WTC11 (cell line): ENCODE measurements at regions of chr12 and their contacts with region 1.

Region 1: DNA sequence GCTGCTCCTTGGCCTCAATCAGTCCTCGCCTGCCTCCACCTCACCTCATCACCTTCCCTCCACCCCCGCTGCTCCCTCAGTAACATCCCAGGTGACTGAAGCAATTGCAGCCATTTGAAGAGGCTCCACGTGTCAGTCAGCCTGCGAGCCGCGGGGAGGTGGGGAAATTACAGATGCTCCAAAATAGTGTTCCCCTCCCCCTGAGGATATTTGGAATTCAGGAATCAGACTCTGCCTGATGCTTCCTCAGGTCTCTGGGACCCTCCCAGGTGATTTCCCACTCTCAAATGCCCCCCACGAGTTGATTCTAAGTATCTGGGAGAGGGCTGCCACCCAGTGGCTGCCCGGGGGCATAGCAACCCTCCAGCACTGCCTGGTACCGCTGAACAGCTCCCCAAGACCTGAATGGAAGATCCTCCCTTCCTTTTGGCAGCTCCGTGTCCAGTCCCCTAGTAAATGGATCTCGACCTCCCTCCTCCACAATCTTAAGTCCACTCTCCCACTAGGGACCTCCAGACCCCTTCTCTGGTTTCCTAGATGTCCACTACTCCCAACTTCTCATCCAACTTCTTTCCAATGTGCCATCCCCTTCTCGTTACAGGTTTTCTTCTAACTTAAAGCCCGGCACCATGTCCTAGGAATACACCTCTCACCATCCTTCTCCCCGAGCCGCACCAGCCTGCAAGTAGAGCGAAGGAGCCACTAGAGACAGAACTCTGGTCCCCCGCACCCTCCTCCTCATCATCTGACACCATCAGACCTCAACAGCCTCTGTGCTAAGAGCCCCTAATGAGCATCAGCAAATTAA is 1.4 kb upstream of the ASIC1 start:
- DNase-seq: peak; percentile 72
- ATAC-seq: peak; percentile 46
- H3K4me3 Mint-ChIP-seq: peak overlapping the region; percentile 79
- H3K27ac Mint-ChIP-seq: no peak overlapping the region
- H3K4me1 Mint-ChIP-seq: peaks cover 25% of the 10 kb centered on the region
- H3K27me3 Mint-ChIP-seq: peaks cover 95% of the 10 kb centered on the region
- CTCF ChIP-seq: peak; percentile 94

Region 2: GRCh38 chr12:49959570-49960465 is 96.2 kb before region 1 on chr12:
- CTCF ChIA-PET with region 1: interaction called, 12 read pairs
- POLR2A ChIA-PET with region 1: interaction called, 3 read pairs
- DNase-seq: peak; percentile 61
- ATAC-seq: peak; percentile 72
- H3K4me3 Mint-ChIP-seq: peak overlapping the region; percentile 65
- H3K27ac Mint-ChIP-seq: no peak overlapping the region
- H3K4me1 Mint-ChIP-seq: peaks cover 24% of the 10 kb centered on the region
- H3K27me3 Mint-ChIP-seq: peaks cover 69% of the 10 kb centered on the region
- CTCF ChIP-seq: no peak

Region 3: GRCh38 chr12:49983892-49984291 is 72.1 kb before region 1 on chr12:
- CTCF ChIA-PET with region 1: interaction called, 12 read pairs
- POLR2A ChIA-PET with region 1: no interaction called
- DNase-seq: no peak
- ATAC-seq: no peak
- H3K4me3 Mint-ChIP-seq: no peak overlapping the region
- H3K27ac Mint-ChIP-seq: no peak overlapping the region
- H3K4me1 Mint-ChIP-seq: peaks cover 26% of the 10 kb centered on the region
- H3K27me3 Mint-ChIP-seq: no peaks in the 10 kb centered on the region
- CTCF ChIP-seq: no peak

Region 4: DNA sequence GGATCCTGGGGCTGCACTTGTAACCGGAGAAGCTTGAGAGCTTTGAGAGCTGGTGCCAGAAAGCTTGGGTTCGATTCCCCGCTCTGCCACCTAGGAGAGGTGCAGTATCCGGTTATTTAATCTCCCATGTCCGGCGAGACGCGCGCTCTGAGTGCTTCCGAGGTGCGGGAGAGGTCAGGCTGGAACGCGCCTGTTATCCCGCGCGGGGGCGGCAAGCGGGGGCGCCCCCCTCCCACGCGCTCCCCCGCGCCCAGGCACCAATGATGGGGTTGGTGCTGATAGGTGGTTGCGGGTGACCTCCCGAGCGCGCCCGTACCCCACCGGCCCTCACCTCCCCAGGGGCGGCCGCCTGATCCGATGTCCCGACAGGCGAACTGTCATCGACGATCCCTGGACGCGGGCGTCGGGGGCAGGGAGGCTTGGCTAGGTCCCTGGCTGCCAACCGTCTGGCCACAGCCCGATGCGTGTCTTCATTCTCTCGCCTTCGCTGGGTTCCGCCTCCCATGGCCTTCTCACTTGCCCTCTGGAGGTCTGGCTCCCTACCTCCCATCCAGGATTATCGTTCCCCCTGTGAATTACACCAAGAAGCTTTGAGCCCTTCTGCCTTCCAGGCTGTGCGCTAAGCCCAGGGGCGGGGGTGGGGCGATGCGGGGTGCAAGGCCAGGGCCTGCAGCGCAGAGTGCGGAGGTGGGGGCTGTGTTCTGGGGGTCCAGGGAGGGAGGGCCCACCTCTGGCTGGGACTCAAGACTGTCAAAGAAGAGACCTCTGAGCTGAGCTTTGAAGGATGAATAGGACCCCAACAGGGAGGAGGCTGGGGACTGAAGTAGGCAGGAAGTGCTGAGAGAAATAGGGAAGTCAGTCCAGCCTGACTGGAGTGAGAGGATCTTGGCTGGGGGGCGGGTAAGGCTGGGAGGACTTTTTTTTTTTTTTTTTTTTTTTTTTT is 23.1 kb before region 1 on chr12:
- CTCF ChIA-PET with region 1: interaction called, 120 read pairs
- POLR2A ChIA-PET with region 1: no interaction called
- DNase-seq: peak; percentile 53
- ATAC-seq: peak; percentile 78
- H3K4me3 Mint-ChIP-seq: peak overlapping the region; percentile 78
- H3K27ac Mint-ChIP-seq: no peak overlapping the region
- H3K4me1 Mint-ChIP-seq: peaks cover 3% of the 10 kb centered on the region
- H3K27me3 Mint-ChIP-seq: no peaks in the 10 kb centered on the region; the same call in 1 of the 2 replicates
- CTCF ChIP-seq: no peak

Region 5: DNA sequence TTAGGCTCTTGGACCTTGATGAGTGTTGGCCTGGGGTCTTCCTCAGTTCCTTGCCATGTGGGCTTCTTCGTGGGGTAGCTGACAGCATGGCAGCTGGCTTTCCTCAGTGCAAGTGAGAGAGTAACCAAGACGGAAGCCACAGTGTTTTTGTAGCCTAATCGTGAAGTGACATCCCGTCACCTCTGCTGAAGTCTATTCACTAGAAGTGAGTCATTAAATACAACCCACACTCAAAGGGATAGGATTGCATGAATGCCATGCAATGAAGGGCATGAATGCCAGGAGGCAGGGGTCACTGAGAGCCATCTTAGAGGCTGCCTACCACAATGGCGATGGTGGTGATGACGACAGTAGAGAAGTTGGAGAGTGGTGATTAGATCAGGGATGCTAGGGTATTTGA is 12.2 kb before region 1 on chr12:
- CTCF ChIA-PET with region 1: interaction called, 120 read pairs
- POLR2A ChIA-PET with region 1: interaction called, 3 read pairs
- DNase-seq: no peak
- ATAC-seq: no peak
- H3K4me3 Mint-ChIP-seq: no peak overlapping the region
- H3K27ac Mint-ChIP-seq: no peak overlapping the region
- H3K4me1 Mint-ChIP-seq: peaks cover 3% of the 10 kb centered on the region; the same call in 1 of the 2 replicates
- H3K27me3 Mint-ChIP-seq: peaks cover 36% of the 10 kb centered on the region
- CTCF ChIP-seq: no peak